Activated CD4-positive, alpha-beta memory T cell treated with anti-CD3 and anti-CD28 coated beads, Interleukin-2, amount 10 ng/mL, durations not matched to agents 7 days and 5 days (primary cell): ENCODE measurements at regions of chr7 and their contacts with region 1.

Region 1: GRCh38 chr7:129611246-129612111 is at the start of gene NRF1:
- DNase-seq: peak; percentile 91
- H3K4me3 Mint-ChIP-seq: peak within 1 kb of the TSS; percentile 97
- H3K27ac Mint-ChIP-seq: peak within 1 kb of the TSS; percentile 86
- H3K4me1 Mint-ChIP-seq: peaks cover 58% of the 10 kb centered on the region
- H3K27me3 Mint-ChIP-seq: no peaks in the 10 kb centered on the region
- total RNA-seq, gene NRF1: 21.9 to 24.7 TPM

Region 2: GRCh38 chr7:129037585-129037984 is 573.9 kb before region 1 on chr7:
- CTCF ChIA-PET with region 1: no interaction called
- POLR2A ChIA-PET with region 1: no interaction called
- DNase-seq: no peak
- H3K4me3 Mint-ChIP-seq: no peak overlapping the region
- H3K27ac Mint-ChIP-seq: no peak overlapping the region
- H3K4me1 Mint-ChIP-seq: peaks cover 22% of the 10 kb centered on the region
- H3K27me3 Mint-ChIP-seq: no peaks in the 10 kb centered on the region

Region 3: DNA sequence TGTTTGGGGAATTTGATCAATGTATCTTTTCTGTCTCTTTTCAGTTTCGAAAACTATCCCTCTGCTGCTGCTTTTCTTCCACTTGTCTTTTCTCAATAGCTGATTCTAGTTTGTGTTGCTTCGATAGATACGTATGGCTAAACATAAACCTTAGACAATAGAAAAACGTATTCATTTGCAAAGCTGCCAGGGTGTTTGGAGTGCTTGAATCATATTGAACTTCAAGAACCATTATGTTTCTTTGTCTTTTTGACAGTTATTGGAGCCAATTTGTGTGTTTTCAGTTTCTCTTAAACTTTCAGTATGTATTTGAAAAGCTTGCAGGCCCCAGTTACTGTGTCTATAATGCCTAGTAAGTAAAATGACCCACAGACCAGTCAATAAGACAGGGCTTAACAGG is 25.2 kb after region 1 on chr7:
- CTCF ChIA-PET with region 1: interaction called, 11 read pairs
- POLR2A ChIA-PET with region 1: interaction called, 8 read pairs
- DNase-seq: no peak
- H3K4me3 Mint-ChIP-seq: no peak overlapping the region
- H3K27ac Mint-ChIP-seq: no peak overlapping the region
- H3K4me1 Mint-ChIP-seq: peaks cover 11% of the 10 kb centered on the region
- H3K27me3 Mint-ChIP-seq: no peaks in the 10 kb centered on the region

Region 4: DNA sequence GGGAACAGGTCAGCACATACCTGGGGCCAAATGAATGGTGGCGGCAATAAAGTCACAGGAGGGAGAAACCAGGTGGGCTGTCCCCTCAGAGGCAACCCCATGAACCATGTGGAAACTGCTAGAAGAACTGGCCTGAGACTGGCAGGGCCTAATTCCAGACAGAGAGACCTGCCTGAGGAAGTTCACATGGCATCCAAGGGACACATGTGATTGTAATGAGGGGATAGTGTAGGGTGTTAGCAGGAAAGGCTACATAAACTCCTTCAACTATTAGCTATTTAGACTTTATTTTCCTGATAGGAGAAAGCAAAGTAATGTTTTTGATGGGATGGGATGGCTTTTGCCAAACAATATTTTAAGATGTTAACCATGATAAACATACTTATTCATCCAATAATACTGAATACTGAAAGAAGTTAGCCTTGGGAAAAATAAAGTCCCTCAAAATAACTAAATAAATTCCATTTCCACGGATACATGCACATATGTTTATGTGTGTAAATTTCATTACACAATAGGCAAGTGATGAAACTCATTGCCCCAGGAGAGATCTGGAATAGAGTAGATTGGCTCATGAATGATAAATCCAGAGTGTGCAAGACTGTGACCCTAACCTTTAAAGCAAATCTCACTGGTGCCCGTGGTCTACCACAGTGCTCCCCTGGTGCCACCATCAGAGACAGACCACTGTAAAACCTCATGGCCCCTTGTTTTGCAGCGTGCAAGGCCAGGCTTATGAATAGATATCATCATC is 137.1 kb after region 1 on chr7:
- CTCF ChIA-PET with region 1: no interaction called
- POLR2A ChIA-PET with region 1: no interaction called
- DNase-seq: no peak
- H3K4me3 Mint-ChIP-seq: no peak overlapping the region
- H3K27ac Mint-ChIP-seq: no peak overlapping the region
- H3K4me1 Mint-ChIP-seq: no peaks in the 10 kb centered on the region
- H3K27me3 Mint-ChIP-seq: no peaks in the 10 kb centered on the region